Sciatic nerve (tissue), 2 donors: ENCODE measurements at regions of chr14 and their contacts with region 1.

Region 1: DNA sequence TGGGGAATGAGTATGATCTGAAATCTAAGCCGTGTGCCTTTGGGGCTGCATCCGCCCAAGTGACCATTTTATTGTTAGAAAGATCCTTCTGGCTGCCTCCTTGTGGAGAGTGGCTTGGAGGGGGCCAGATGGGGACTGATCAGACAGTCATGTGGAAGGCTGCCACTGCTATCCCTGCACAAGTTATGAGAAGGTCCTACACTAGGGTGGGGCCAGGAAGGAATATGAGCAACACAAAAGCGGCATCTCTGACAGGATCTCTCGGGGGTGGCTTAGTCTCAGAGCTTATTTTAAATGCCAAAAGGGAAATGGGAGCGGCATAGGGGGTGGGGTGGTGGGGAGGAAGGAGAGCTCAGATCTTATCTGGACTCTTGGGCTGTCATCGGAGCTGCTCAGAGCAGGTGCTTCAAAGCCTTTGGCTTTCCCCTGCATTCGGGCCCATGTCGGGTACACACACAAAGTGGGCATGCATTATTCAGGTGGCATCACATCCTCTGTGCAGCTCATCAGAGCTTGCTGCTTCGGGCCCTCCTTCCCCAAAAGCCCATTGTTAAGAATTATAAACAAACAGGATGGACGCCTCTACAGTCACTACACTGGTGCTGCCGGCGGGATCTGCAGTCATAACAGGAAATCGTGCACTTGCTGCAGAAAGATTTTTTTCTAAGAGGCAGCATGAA is 805.4 kb downstream of the VRK1 start:
- DNase-seq: no peak
- ATAC-seq: no peak

Region 2: GRCh38 chr14:97080991-97081390 is 521.6 kb before region 1 on chr14:
- intact Hi-C with region 1: loop called (anchors 5 kb)
- DNase-seq: no peak
- ATAC-seq: no peak

Region 3: GRCh38 chr14:97506626-97507025 is 96.0 kb before region 1 on chr14:
- intact Hi-C with region 1: no loop called
- DNase-seq: no peak
- ATAC-seq: no peak

Region 4: DNA sequence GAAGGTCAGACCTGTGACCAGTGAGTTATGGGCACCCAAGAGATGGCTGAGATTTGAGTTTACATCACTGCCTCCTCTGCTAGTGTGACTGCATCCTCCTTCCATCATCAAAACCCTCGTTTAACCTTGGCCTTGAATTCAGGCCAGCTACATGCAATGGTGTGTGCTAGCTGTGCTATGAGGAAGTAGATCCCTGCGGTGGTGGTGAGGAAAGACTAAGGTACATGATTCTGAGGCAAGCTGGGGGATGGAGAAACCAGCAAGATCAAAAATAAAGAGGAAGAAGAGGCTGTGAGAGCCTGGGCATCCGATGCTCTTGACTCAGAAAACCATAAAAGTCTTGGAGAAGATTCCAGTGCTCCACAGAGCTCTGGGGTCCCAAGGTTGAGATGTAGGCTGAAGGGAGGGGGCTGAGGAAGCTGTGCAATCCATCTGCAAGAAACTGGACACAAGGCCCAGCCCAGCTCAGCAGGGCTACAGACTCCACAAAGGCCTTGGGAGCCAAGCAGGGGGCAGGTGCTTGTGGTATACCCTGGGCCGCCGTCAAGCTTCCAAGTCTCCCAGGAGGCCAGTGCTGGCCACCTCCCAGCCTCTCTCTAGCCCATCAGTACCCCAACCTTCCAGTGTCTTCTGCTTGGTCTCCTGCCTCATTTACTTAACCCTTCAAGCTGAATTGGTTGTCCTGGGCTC is 30.6 kb before region 1 on chr14:
- intact Hi-C with region 1: no loop called
- DNase-seq: no peak
- ATAC-seq: no peak